ENCODE measurements at regions of chr7 and their contacts with region 1.

Region 1: DNA sequence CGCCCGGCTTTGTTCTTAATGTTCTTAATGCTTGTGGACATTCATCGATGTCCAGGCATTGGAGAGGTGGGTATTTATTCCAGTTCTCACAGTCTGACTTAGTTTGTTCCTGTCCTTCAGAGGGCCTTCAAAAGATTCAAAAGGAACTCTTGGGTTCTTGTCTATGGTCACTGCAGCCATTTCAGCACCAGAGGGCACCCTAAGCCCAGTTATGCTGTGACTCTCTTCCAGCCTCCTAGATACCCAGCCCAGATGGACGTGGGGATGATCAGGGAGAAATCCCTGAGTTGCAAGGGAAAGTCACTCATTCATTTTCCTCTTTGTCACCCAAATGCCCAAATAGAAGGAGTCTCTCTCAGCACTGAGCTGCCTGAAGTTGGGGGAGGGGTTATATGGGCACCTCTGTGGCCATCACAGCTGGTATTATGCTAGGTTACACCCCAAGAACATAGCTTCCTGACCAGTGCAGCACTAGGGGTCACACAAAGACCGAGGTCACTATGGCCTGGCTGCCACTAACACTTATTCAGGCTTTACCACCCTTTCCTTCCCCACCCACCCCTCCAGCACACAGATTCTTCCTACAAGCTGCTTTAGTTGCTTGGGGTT is 26.5 kb upstream of the CCDC126 start:
- DNase-seq: peak; percentile 85
- H3K4me3 Mint-ChIP-seq: no peak overlapping the region
- H3K27ac Mint-ChIP-seq: no peak overlapping the region
- H3K4me1 Mint-ChIP-seq: no peaks in the 10 kb centered on the region
- H3K27me3 Mint-ChIP-seq: no peaks in the 10 kb centered on the region
- CTCF ChIP-seq: peak; percentile 90

Region 2: GRCh38 chr7:23586159-23586558 is 15.5 kb after region 1 on chr7:
- CTCF ChIA-PET with region 1: interaction called, 19 read pairs
- POLR2A ChIA-PET with region 1: no interaction called
- intact Hi-C with region 1: no loop called
- DNase-seq: no peak
- H3K4me3 Mint-ChIP-seq: no peak overlapping the region
- H3K27ac Mint-ChIP-seq: no peak overlapping the region
- H3K4me1 Mint-ChIP-seq: no peaks in the 10 kb centered on the region
- H3K27me3 Mint-ChIP-seq: no peaks in the 10 kb centered on the region
- CTCF ChIP-seq: no peak

Region 3: GRCh38 chr7:23597094-23598091 is 26.7 kb after region 1 on chr7 and contains the start of gene CCDC126:
- CTCF ChIA-PET with region 1: interaction called, 14 read pairs
- POLR2A ChIA-PET with region 1: interaction called, 4 read pairs
- intact Hi-C with region 1: no loop called
- DNase-seq: peak; percentile 91
- H3K4me3 Mint-ChIP-seq: peak within 1 kb of the TSS; percentile 88
- H3K27ac Mint-ChIP-seq: peak within 1 kb of the TSS; percentile 87
- H3K4me1 Mint-ChIP-seq: peaks cover 27% of the 10 kb centered on the region
- H3K27me3 Mint-ChIP-seq: no peaks in the 10 kb centered on the region
- CTCF ChIP-seq: no peak
- total RNA-seq, gene CCDC126: 4.2 and 4.7 TPM in 2 replicates

Region 4: GRCh38 chr7:23712368-23713284 is 141.9 kb after region 1 on chr7:
- CTCF ChIA-PET with region 1: interaction called, 175 read pairs
- POLR2A ChIA-PET with region 1: interaction called, 6 read pairs
- intact Hi-C with region 1: loop called (anchors 1 kb)
- DNase-seq: peak; percentile 69
- H3K4me3 Mint-ChIP-seq: no peak overlapping the region
- H3K27ac Mint-ChIP-seq: peak overlapping the region; percentile 27
- H3K4me1 Mint-ChIP-seq: peaks cover 17% of the 10 kb centered on the region
- H3K27me3 Mint-ChIP-seq: no peaks in the 10 kb centered on the region
- CTCF ChIP-seq: peak; percentile 52

Region 5: DNA sequence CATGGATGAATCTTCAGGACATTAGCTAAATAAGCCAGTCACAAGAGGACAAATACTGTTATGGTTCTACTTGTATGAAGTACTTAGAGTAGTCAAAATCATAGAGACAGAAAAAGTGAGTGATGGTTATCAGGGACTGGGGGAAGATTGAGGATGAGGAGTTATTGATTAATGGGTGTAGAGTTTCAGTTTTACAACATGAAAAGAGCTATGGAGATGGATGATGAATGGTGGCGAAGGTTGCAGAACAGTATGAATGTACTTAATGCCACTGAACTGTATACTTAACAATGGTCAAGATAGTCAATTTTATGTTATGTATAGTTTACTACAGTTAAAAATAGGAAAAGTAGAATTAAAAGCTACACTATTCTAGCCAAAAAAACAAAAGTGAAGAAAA is 147.1 kb after region 1 on chr7:
- CTCF ChIA-PET with region 1: interaction called, 175 read pairs
- POLR2A ChIA-PET with region 1: interaction called, 3 read pairs
- intact Hi-C with region 1: loop called (anchors 1 kb)
- DNase-seq: no peak
- H3K4me3 Mint-ChIP-seq: no peak overlapping the region
- H3K27ac Mint-ChIP-seq: no peak overlapping the region
- H3K4me1 Mint-ChIP-seq: peaks cover 11% of the 10 kb centered on the region
- H3K27me3 Mint-ChIP-seq: no peaks in the 10 kb centered on the region
- CTCF ChIP-seq: no peak

Region 6: GRCh38 chr7:24665564-24666294 is 1095.0 kb after region 1 on chr7:
- CTCF ChIA-PET with region 1: interaction called, 7 read pairs
- POLR2A ChIA-PET with region 1: no interaction called
- intact Hi-C with region 1: loop called (anchors 5 kb)
- DNase-seq: peak; percentile 68
- H3K4me3 Mint-ChIP-seq: no peak overlapping the region
- H3K27ac Mint-ChIP-seq: no peak overlapping the region
- H3K4me1 Mint-ChIP-seq: peaks cover 21% of the 10 kb centered on the region
- H3K27me3 Mint-ChIP-seq: no peaks in the 10 kb centered on the region
- CTCF ChIP-seq: peak; percentile 63